Transverse colon (tissue), 4 donors: ENCODE measurements at regions of chr20 and their contacts with region 1.

Region 1: GRCh38 chr20:35511814-35512420 is 17.5 kb downstream of the C20orf173 start:
- DNase-seq: peak; percentile 30
- H3K4me3 ChIP-seq: no peak overlapping the region
- H3K27ac ChIP-seq: no peak overlapping the region
- H3K4me1 ChIP-seq: no peaks in the 10 kb centered on the region
- H3K27me3 ChIP-seq: no peaks in the 10 kb centered on the region
- CTCF ChIP-seq: peak; percentile 27 to 58 (median 43)
- EP300 ChIP-seq: no peak
- POLR2A ChIP-seq: no peak

Region 2: DNA sequence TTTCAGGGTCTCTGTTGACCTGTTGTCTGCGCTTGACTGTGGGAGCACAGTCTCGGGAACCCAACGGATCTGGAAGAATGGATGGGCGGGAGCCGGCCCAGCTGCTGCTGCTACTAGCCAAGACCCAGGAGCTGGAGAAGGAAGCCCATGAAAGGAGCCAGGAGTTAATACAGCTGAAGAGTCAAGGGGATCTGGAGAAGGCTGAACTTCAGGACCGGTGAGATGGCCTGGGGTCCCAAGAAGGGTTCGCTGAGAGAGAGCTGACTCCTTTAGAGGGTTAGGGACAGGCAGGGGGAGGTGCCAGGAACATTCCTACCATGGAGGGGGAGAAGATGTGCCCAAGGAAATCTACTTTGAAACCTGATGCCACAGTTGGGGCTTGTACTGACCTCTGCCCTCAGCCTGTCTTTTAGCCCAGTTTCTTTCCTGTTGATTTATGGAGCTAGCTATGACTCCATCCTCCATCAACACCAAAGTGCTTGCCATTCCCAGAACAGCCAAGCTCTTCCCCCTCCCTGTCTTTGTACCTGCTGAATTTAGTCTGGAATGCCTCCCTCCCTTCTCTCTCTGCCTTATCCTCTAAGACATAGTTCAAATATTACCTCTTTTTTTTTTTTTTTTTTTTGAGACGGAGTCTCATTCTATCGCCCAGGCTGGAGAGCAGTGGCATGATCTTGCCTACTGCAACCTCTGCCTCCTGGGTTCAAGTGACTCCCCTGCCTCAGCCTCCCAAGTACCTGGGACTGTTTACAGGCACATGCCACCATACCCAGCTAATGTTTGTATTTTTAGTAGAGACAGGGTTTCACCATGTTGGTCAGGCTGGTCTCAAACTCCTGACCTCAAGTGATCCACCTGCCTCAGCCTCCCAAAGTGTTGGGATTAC is 44.3 kb before region 1 on chr20:
- in situ Hi-C with region 1: no loop called
- intact Hi-C with region 1: loop called (anchors 1 kb)
- DNase-seq: no peak
- H3K4me3 ChIP-seq: no peak overlapping the region
- H3K27ac ChIP-seq: peak overlapping the region in 1 of 4 donors; percentile 8
- H3K4me1 ChIP-seq: peaks cover 0 to 5% (median 0%) of the 10 kb centered on the region in 4 donors
- H3K27me3 ChIP-seq: no peaks in the 10 kb centered on the region
- CTCF ChIP-seq: no peak
- EP300 ChIP-seq: no peak
- POLR2A ChIP-seq: no peak